ENCODE measurements at regions of chr11 and their contacts with region 1.

Region 1: DNA sequence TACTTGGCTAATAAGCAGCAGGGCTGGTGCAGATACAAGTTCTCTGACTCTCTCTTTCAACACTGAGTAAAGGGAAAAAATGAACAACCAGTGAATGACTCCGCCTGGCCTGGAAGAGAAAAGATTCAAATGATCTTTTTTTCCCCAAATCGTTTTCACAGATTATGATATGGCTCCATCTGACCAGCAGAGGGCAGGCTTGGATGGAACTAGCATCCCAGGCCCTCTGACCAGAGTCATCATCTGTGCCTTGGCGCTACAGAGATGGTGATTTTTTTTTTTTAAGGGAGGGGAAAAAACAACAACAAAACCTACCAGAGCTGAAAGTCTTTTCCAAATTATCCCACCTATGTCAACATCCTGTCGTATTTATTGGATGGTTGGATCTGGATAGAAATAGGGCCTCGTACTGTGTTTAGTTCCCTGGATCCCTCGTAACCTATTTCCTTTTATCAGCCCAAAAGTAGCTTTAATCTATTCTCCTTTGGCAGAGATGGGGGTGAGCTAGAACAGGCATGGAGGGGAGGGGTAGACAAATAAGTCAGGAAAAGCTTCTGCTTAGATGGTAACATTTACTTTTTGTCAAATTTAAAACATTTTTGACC is 69.7 kb downstream of the PRSS23 start:
- DNase-seq: peak; percentile 27
- H3K4me3 ChIP-seq: no peak overlapping the region
- H3K27ac ChIP-seq: no peak overlapping the region
- H3K27me3 ChIP-seq: no peaks in the 10 kb centered on the region
- CTCF ChIP-seq: peak; percentile 87

Region 2: GRCh38 chr11:86888164-86889000 is 18.3 kb after region 1 on chr11:
- CTCF ChIA-PET with region 1: interaction called, 18 read pairs
- POLR2A ChIA-PET with region 1: no interaction called
- DNase-seq: peak; percentile 71
- H3K4me3 ChIP-seq: no peak overlapping the region
- H3K27ac ChIP-seq: peak overlapping the region; percentile 59
- H3K27me3 ChIP-seq: no peaks in the 10 kb centered on the region
- CTCF ChIP-seq: no peak

Region 3: GRCh38 chr11:86910592-86910991 is 40.5 kb after region 1 on chr11:
- CTCF ChIA-PET with region 1: interaction called, 252 read pairs
- POLR2A ChIA-PET with region 1: no interaction called
- DNase-seq: no peak
- H3K4me3 ChIP-seq: no peak overlapping the region
- H3K27ac ChIP-seq: no peak overlapping the region
- H3K27me3 ChIP-seq: no peaks in the 10 kb centered on the region
- CTCF ChIP-seq: no peak

Region 4: GRCh38 chr11:86930957-86931547 is 61.0 kb after region 1 on chr11:
- CTCF ChIA-PET with region 1: interaction called, 12 read pairs
- POLR2A ChIA-PET with region 1: no interaction called
- DNase-seq: no peak
- H3K4me3 ChIP-seq: no peak overlapping the region
- H3K27ac ChIP-seq: no peak overlapping the region
- H3K27me3 ChIP-seq: no peaks in the 10 kb centered on the region
- CTCF ChIP-seq: no peak

Region 5: DNA sequence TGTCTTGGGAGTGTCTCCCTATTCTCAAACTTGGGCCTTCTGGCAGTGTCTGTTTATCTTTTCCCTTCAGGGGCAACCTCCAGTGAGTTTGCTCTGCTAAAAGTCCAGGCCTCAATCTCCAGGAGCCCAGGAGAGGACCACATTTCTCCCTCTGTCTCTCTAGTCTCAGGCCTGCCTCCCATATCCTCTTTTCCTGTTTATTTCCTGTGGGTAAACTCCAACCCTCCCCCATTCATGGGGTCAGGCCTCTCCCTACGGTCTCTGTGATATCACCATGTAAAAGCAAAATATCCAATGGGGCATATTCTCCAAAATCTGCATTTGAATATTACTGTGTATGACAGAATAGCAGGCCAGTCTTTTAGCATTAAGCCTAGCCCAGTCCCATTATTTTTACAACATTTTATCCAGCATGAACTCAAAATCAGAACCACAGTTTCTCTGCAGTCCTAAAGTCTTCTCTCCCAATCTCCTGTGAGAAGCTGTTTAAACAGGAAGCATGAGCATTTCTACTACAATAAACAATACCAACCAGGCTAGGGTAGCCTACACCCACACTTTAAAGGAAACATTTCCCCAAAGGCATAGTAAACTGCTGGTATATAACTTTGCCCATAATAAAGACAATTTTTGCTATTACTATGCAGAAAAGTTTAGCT is 149.7 kb after region 1 on chr11:
- CTCF ChIA-PET with region 1: no interaction called
- POLR2A ChIA-PET with region 1: no interaction called
- DNase-seq: no peak
- H3K4me3 ChIP-seq: no peak overlapping the region
- H3K27ac ChIP-seq: peak overlapping the region; percentile 65
- H3K27me3 ChIP-seq: no peaks in the 10 kb centered on the region
- CTCF ChIP-seq: no peak

Region 6: DNA sequence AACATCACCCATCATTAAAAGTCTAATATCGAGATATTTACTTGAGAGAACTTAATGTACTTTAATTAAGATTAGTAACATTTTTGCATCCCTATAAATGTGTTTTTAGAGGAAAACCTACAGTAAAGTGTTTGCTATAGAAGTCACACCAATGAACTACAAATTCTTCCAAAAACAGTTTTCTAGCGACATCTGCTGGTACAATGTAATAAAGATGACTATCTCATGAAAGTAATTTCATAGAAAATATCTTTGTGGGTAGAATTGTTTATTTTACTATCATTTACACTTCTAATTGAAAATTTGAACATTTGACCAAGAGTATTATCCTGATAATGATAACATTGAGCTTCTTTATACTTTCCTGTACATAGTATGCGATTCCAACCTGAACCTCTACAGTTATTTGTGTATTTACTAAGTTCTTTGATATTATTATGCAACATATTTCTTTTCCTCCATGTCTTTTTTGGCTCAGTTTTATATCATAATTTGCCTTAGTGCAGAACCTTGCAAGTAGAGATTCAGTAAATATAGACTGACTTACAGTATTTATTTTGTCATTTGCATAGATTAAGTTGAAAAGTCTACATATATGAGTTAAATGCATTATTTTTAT is 420.3 kb after region 1 on chr11:
- CTCF ChIA-PET with region 1: interaction called, 26 read pairs
- POLR2A ChIA-PET with region 1: no interaction called
- DNase-seq: peak; percentile 24
- H3K4me3 ChIP-seq: no peak overlapping the region
- H3K27ac ChIP-seq: no peak overlapping the region
- H3K27me3 ChIP-seq: no peaks in the 10 kb centered on the region
- CTCF ChIP-seq: peak; percentile 62

Measured in AG04450 (cell line).